ENCODE measurements at regions of chr4 and their contacts with region 1.

Region 1: GRCh38 chr4:157514711-157515110 is 294.2 kb downstream of the GRIA2 start:
- DNase-seq: peak; percentile 13
- H3K4me3 Mint-ChIP-seq: no peak overlapping the region
- H3K27ac Mint-ChIP-seq: no peak overlapping the region
- H3K4me1 Mint-ChIP-seq: no peaks in the 10 kb centered on the region
- H3K27me3 Mint-ChIP-seq: no peaks in the 10 kb centered on the region
- CTCF ChIP-seq: peak; percentile 24

Region 2: GRCh38 chr4:157220371-157220881 is 294.3 kb before region 1 on chr4 and contains the start of gene GRIA2:
- CTCF ChIA-PET with region 1: no interaction called
- POLR2A ChIA-PET with region 1: no interaction called
- intact Hi-C with region 1: loop called (anchors 10 kb)
- DNase-seq: no peak
- H3K4me3 Mint-ChIP-seq: peak within 1 kb of the TSS; percentile 61
- H3K27ac Mint-ChIP-seq: no peak within 1 kb of the TSS
- H3K4me1 Mint-ChIP-seq: peaks cover 5% of the 10 kb centered on the region
- H3K27me3 Mint-ChIP-seq: peaks cover 32% of the 10 kb centered on the region
- CTCF ChIP-seq: no peak
- total RNA-seq, gene GRIA2: not detected in 2 replicates

Region 3: DNA sequence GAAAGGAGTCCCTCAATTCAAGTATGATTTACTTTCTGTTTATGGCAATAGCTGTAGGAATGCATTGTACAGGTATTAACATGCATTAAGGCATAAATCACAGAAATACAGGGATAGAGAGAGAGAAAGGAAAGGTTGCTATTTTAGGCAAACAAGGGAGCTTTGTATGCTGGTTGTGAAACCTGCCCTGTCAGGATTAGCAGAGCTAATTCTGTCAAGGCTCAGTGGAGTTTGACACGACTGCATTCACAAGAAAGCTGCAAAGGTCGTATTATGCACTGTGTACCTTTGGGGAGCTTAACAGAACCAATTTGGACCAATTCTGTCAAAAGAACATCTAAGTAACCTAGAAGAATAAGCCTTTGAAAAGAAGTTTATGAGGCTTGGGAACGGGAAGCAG is 54.9 kb before region 1 on chr4:
- CTCF ChIA-PET with region 1: no interaction called
- POLR2A ChIA-PET with region 1: no interaction called
- intact Hi-C with region 1: no loop called
- DNase-seq: peak; percentile 37
- H3K4me3 Mint-ChIP-seq: peak overlapping the region; percentile 39
- H3K27ac Mint-ChIP-seq: peak overlapping the region; percentile 65
- H3K4me1 Mint-ChIP-seq: peaks cover 16% of the 10 kb centered on the region
- H3K27me3 Mint-ChIP-seq: no peaks in the 10 kb centered on the region
- CTCF ChIP-seq: no peak

Region 4: DNA sequence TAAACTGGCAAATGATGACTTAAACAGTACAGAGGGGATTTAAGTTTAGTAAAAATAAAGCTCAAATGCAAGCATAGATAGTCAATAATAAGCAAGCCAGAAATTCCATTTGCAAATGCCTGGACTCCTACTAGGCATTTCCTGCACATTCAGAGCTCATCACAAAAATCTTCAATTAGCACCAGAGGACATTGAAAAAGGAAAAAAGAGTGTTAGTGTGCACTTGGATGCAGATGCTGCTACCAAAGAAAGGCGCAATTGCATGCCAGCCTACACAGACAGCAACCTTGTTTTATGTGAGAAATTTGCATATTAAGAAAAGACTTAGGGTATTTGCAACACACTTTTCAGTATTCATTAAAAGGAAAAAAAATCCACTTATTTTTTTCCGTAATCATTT is 12.1 kb before region 1 on chr4:
- CTCF ChIA-PET with region 1: no interaction called
- POLR2A ChIA-PET with region 1: no interaction called
- intact Hi-C with region 1: no loop called
- DNase-seq: no peak
- H3K4me3 Mint-ChIP-seq: no peak overlapping the region
- H3K27ac Mint-ChIP-seq: no peak overlapping the region
- H3K4me1 Mint-ChIP-seq: no peaks in the 10 kb centered on the region
- H3K27me3 Mint-ChIP-seq: no peaks in the 10 kb centered on the region
- CTCF ChIP-seq: no peak